ENCODE measurements at regions of chr5 and their contacts with region 1.

Region 1: DNA sequence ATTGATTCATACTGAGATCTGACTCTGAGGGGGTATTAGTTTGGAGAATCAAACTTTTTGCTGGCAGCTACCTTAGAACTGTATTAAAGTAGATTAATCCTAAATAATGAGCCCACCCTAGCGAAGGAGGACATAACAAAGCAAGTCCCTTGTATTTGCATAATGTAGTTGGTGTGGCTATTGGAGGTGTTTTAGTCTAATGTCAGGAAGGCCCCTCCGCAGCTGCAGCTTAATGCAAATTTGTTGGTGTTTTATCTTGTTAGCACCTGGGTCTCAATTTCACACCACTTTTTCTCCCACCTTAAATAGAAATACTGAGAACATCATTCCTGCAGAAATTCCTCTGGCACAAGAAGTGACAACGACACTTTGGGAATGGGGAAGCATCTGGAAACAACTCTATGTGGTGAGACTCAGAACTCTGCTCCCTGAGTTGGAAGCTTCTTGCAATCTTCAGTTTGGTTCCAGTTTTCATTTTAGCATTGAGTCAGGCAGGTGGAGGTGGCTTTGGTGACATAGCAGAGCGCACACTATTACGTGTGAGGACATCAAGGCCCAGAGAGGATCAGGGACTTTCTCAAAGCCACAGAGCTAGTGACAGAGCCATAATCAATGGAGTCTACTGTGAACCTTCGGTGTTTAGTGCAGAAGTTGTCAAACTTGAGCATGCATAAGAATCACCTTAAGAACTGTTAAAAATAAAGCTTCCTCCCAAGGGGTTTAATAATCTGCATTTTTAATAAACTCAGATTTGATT is 33.9 kb downstream of the DOCK2 start:
- DNase-seq: no peak
- H3K4me3 ChIP-seq: no peak overlapping the region
- H3K4me3 Mint-ChIP-seq: no peak overlapping the region
- H3K27ac ChIP-seq: no peak overlapping the region
- H3K27ac Mint-ChIP-seq: peak overlapping the region in 2 of 7 donors; percentile 32 to 76
- H3K4me1 ChIP-seq: no peaks in the 10 kb centered on the region
- H3K4me1 Mint-ChIP-seq: peaks cover 12 to 42% (median 26%) of the 10 kb centered on the region in 4 donors
- H3K27me3 ChIP-seq: no peaks in the 10 kb centered on the region
- H3K27me3 Mint-ChIP-seq: no peaks in the 10 kb centered on the region

Region 2: DNA sequence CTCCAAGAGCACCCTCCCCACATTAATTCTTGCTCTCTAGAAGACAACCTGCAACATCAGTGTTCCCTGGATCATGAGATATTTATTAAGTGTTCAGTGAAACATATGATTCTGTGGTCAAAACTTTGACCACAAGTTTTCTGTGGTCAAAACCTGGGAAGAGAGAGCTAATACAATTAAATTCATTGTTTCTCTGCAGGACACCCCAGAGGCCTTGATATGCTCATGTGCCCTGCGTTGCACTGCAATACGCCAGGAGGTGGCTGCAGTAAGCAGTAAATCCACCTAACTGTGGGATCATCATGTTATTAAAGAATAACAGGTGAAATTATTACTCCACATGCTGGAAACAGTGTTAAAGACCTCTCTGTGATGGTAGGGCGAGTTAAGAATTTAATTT is 196.7 kb before region 1 on chr5:
- CTCF ChIA-PET with region 1: no interaction called
- POLR2A ChIA-PET with region 1: no interaction called
- intact Hi-C with region 1: loop called (anchors 5 kb)
- DNase-seq: no peak
- H3K4me3 ChIP-seq: no peak overlapping the region
- H3K4me3 Mint-ChIP-seq: no peak overlapping the region
- H3K27ac ChIP-seq: no peak overlapping the region
- H3K27ac Mint-ChIP-seq: no peak overlapping the region
- H3K4me1 ChIP-seq: no peaks in the 10 kb centered on the region
- H3K4me1 Mint-ChIP-seq: peaks cover 0 to 2% (median 0%) of the 10 kb centered on the region in 4 donors
- H3K27me3 ChIP-seq: peaks cover 3% of the 10 kb centered on the region
- H3K27me3 Mint-ChIP-seq: peaks cover 4 to 10% of the 10 kb centered on the region in 2 donors

Measured in CD4-positive, alpha-beta memory T cell (primary cell).